ENCODE measurements at regions of chr20 and their contacts with region 1.

Region 1: DNA sequence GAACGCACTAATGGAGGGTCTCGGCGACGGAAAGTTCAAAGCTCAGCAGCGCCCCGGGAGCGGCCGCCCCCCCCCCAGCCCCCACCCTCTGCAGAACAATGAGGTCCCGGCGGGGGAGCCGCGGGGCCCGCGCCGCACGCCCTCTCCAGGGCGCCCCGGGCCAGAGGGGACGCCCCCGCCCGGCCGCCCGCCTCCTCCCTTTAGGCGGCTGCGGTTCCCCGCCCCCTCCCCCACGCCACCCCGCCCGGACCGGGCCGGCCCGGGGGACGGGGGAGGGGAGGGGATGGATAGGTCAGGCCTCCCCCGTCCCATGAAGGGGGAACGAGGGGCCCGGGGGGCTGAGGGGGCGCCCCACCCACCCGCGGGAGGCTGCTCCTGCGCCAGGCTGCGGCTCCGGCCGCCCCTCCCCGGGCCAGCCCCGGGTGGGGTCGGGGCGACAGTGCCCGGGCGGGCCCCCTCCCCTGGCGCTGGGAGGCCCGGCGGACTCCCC is 1.5 kb downstream of the NOL4L start:
- DNase-seq: no peak
- H3K4me3 Mint-ChIP-seq: no peak overlapping the region
- H3K27ac Mint-ChIP-seq: no peak overlapping the region
- H3K4me1 Mint-ChIP-seq: peaks cover 36% of the 10 kb centered on the region
- H3K27me3 Mint-ChIP-seq: peaks cover 21% of the 10 kb centered on the region

Region 2: GRCh38 chr20:32535953-32536823 is 47.4 kb before region 1 on chr20:
- intact Hi-C with region 1: loop called (anchors 1 kb)
- DNase-seq: peak; percentile 76
- H3K4me3 Mint-ChIP-seq: peak overlapping the region; percentile 76
- H3K27ac Mint-ChIP-seq: peak overlapping the region; percentile 90
- H3K4me1 Mint-ChIP-seq: peaks cover 84% of the 10 kb centered on the region
- H3K27me3 Mint-ChIP-seq: no peaks in the 10 kb centered on the region

Region 3: GRCh38 chr20:32610472-32611218 is 27.0 kb after region 1 on chr20:
- intact Hi-C with region 1: no loop called
- DNase-seq: no peak
- H3K4me3 Mint-ChIP-seq: no peak overlapping the region
- H3K27ac Mint-ChIP-seq: no peak overlapping the region
- H3K4me1 Mint-ChIP-seq: no peaks in the 10 kb centered on the region
- H3K27me3 Mint-ChIP-seq: peaks cover 7% of the 10 kb centered on the region